OCI-LY7 (cell line): ENCODE measurements at regions of chr1 and their contacts with region 1.

Region 1: DNA sequence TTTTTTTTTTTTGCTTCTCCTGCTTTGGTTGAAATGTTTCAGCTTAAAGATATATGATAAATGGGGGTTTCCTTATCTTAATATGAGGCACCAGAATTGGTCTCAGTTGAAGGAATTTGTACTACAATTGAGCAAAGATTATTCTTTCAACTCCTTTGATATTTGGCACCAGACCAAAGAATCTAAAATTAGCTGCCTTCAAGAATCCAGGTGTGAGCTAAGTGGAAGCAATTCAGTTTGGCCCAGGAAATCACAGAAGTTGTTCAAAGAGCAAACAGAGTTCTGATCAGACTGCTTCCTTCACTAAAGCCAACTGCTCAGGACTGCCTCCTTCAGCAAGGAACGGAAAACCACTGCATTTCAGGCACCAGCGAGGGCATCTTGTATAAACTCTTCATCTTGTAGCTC is 68.3 kb upstream of the BCAR3 start:
- DNase-seq: peak; percentile 89
- H3K4me3 ChIP-seq: peak overlapping the region; percentile 32
- H3K27ac ChIP-seq: peak overlapping the region; percentile 90
- H3K4me1 ChIP-seq: peaks cover 51% of the 10 kb centered on the region
- CTCF ChIP-seq: peak; percentile 85

Region 2: GRCh38 chr1:93629099-93630059 is 120.5 kb before region 1 on chr1:
- CTCF ChIA-PET with region 1: interaction called, 5 read pairs
- POLR2A ChIA-PET with region 1: interaction called, 6 read pairs
- intact Hi-C with region 1: loop called (anchors 1 kb)
- DNase-seq: peak; percentile 83
- H3K4me3 ChIP-seq: no peak overlapping the region
- H3K27ac ChIP-seq: no peak overlapping the region
- H3K4me1 ChIP-seq: peaks cover 5% of the 10 kb centered on the region
- CTCF ChIP-seq: peak; percentile 99

Region 3: GRCh38 chr1:93701619-93702018 is 48.3 kb before region 1 on chr1:
- CTCF ChIA-PET with region 1: interaction called, 10 read pairs
- POLR2A ChIA-PET with region 1: interaction called, 8 read pairs
- intact Hi-C with region 1: loop called (anchors 1 kb)
- DNase-seq: no peak
- H3K4me3 ChIP-seq: no peak overlapping the region
- H3K27ac ChIP-seq: no peak overlapping the region
- H3K4me1 ChIP-seq: peaks cover 78% of the 10 kb centered on the region
- CTCF ChIP-seq: no peak

Region 4: DNA sequence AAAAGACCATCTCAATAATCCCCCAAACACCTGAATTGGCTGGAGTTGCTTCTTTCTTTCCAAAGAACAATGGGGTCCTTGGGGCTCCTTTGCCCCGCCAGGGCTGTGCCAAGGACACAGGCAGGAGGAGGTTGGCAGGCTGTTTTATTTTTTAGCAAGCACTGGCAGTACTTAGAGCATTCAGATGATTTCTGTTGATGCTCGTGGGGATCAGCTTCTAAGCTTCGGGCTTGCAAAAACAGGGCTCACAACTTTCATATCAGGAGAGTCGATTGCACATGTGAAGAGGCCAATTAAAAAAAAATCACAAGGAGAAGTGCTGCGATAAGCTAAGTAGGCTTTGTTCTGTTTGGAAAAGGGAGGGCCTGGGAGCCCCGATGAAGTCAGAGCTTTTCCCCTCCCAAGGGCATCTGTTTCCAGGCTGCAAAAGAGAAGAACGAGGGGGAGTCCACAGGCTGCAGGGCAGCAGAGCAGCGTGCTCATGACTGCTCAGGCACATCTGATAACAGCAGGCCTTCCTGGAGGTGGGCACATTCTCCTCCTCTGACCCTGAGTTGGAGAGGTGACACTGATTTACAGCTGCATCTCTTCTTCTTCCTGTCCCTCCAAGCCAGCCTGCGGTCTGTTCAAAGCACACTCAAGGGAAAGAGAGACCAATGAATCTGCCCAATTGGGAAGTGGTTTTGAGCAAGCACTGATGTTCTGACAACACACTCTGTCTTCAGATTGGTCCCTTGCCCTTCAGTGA is 41.0 kb before region 1 on chr1:
- CTCF ChIA-PET with region 1: interaction called, 10 read pairs
- POLR2A ChIA-PET with region 1: interaction called, 12 read pairs
- intact Hi-C with region 1: loop called (anchors 1 kb)
- DNase-seq: peak; percentile 62
- H3K4me3 ChIP-seq: peak overlapping the region; percentile 51
- H3K27ac ChIP-seq: peak overlapping the region; percentile 98
- H3K4me1 ChIP-seq: peaks cover 95% of the 10 kb centered on the region
- CTCF ChIP-seq: no peak

Region 5: GRCh38 chr1:93715529-93716126 is 34.3 kb before region 1 on chr1:
- CTCF ChIA-PET with region 1: interaction called, 6 read pairs
- POLR2A ChIA-PET with region 1: interaction called, 17 read pairs
- intact Hi-C with region 1: no loop called
- DNase-seq: peak; percentile 78
- H3K4me3 ChIP-seq: peak overlapping the region; percentile 37
- H3K27ac ChIP-seq: peak overlapping the region; percentile 77
- H3K4me1 ChIP-seq: peaks cover 62% of the 10 kb centered on the region
- CTCF ChIP-seq: no peak

Region 6: DNA sequence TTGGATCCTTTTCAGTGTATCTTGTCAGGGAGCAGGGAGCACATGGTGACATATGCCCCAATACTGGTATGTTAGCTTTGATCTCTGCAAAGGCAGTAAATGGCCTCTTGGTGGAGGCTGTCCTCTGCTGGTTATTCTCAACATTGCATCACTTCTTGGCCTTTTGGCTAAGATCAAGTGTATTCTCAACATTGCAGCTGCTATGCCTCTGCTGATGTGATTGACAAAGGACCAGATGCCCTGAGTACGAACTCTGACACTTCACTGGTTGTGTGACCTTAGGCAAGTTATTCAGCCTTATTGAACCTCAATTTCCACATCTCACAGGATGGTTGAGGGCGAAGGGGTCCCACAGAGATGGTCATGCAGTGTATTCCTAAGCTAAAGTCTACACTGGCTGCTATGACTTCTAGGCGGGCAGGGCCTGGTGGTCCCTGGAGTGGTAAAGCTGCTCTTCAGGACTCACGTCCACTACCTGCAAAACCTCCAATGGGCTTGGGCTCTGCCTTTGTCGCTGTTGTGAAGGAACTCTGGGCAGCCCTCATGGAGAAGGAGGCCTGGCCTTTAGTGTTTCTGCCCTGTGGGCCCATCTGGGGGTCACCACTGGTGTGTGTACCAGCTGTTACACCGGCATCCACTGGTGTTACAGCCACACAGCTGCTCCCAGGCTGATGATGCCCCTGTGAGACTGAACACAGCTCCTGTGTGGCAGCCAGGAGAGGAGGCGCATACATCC is 64.3 kb after region 1 on chr1:
- CTCF ChIA-PET with region 1: interaction called, 3 read pairs
- POLR2A ChIA-PET with region 1: interaction called, 5 read pairs
- intact Hi-C with region 1: loop called (anchors 2 kb)
- DNase-seq: peak; percentile 85
- H3K4me3 ChIP-seq: no peak overlapping the region
- H3K27ac ChIP-seq: no peak overlapping the region
- H3K4me1 ChIP-seq: peaks cover 33% of the 10 kb centered on the region
- CTCF ChIP-seq: peak; percentile 100